Activated CD4-positive, alpha-beta memory T cell treated with anti-CD3 and anti-CD28 coated beads for 36 hours (primary cell): ENCODE measurements at regions of chr1 and their contacts with region 1.

Region 1: DNA sequence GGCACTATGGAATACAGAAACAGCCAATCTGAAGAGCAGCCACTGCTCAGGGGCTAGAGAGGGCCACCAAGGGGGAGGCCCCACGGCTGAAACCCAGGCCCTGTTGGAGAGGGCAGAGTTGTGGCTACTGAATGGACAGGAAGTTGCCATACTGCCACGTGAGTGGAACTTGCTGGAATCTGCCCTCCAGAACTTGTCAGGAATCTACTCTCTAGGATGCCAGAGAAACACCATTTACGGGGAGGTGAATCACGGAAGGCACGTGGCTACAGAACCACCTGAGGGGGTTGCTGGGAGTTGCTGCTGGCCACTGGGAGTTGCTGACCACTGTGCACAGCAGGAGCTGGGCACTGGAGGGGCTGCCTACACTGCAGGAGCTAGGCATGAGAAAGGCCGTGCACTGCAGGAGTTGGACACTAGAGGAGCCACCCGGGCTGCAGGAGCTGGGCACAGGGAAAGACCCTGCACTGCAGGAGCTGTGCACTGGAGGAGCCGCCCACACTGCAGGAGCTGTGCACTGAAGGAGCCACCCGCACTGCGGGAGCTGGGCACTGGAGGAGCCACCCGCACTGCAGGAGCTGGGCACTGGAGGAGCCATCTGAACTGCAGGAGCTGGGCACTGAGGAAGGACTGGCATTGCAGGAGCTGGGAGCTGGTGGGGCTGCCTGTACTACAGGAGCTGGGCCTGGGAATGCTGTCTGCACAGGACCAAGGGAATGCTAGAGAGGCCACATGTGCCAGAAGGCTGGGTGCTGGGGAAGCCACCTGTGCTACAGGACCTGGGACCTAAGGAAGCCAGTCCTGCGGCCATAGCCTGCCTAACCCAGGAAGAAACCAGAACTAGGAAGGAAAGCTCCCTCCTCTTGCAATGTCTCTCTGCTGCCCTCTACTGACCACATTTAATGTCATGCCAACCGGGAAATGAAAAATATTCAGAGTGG is 343.4 kb downstream of the MATN1 start:
- DNase-seq: peak; percentile 41
- H3K4me3 Mint-ChIP-seq: no peak overlapping the region
- H3K27ac Mint-ChIP-seq: no peak overlapping the region
- H3K4me1 Mint-ChIP-seq: peaks cover 2% of the 10 kb centered on the region
- H3K27me3 Mint-ChIP-seq: peaks cover 9% of the 10 kb centered on the region

Region 2: DNA sequence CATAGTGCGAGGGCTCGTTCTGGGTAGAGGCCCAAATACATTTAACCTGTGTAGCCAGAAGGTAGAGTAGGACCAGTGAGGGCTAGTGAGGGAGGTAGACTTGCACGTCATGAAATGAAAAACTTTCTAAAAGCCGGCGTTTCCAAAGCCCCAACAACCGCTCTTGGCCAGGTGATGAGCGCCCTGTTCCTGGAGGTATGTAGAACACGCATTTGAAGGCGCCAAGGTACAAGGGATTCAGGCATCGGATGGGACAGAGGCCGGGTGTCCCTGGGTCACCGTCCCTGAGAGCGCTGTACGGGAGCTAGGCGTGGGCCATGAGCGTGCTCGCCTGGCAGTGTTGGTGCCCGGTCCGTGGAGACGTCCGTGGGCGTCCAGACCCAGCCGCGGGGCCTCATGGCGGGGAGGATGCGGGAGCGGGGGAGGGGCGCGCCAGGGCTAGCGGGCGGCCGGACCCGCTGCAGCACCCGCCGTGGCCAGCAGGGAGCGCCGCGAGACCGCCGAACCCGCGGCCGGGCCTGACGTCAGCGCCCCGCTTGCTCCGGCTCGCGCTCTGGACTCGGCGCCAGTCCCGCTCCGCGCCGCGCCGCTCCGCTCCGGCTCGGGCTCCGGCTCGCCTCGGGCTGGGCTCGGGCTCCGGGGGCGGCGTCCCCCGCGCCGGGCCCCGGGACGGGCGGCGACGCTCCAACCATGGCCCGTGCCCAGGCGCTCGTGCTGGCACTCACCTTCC is 1143.8 kb before region 1 on chr1 and contains the start of gene PTPRU:
- CTCF ChIA-PET with region 1: interaction called, 17 read pairs
- POLR2A ChIA-PET with region 1: no interaction called
- intact Hi-C with region 1: no loop called
- DNase-seq: peak; percentile 86
- H3K4me3 Mint-ChIP-seq: peak within 1 kb of the TSS; percentile 60
- H3K27ac Mint-ChIP-seq: no peak within 1 kb of the TSS
- H3K4me1 Mint-ChIP-seq: peaks cover 17% of the 10 kb centered on the region
- H3K27me3 Mint-ChIP-seq: peaks cover 46% of the 10 kb centered on the region
- total RNA-seq, gene PTPRU: 0.17 to 0.85 TPM

Region 3: DNA sequence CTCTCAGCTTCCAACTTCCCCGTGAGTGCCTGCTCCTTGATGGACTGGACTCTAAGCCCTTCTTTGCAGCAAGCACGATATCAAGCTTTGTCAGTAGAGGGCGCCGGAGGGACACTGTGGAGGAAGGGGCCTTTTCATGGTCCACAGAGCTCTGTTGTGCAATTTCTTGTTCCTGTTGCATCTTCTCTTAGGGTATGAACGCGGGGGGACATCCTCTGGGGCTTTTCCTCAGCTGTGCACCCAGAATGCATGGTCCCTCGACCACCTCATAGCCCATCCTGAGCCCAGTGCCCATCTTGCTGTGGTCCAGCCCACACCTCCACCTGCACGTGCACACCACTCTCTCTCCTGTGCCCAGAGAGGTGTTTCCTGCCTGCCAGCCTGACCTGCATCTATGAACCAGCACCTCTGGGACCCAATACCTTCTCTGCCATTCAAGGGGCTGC is 586.8 kb before region 1 on chr1:
- CTCF ChIA-PET with region 1: interaction called, 10 read pairs
- POLR2A ChIA-PET with region 1: no interaction called
- intact Hi-C with region 1: no loop called
- DNase-seq: peak; percentile 80
- H3K4me3 Mint-ChIP-seq: no peak overlapping the region
- H3K27ac Mint-ChIP-seq: no peak overlapping the region
- H3K4me1 Mint-ChIP-seq: no peaks in the 10 kb centered on the region
- H3K27me3 Mint-ChIP-seq: peaks cover 7% of the 10 kb centered on the region

Region 4: DNA sequence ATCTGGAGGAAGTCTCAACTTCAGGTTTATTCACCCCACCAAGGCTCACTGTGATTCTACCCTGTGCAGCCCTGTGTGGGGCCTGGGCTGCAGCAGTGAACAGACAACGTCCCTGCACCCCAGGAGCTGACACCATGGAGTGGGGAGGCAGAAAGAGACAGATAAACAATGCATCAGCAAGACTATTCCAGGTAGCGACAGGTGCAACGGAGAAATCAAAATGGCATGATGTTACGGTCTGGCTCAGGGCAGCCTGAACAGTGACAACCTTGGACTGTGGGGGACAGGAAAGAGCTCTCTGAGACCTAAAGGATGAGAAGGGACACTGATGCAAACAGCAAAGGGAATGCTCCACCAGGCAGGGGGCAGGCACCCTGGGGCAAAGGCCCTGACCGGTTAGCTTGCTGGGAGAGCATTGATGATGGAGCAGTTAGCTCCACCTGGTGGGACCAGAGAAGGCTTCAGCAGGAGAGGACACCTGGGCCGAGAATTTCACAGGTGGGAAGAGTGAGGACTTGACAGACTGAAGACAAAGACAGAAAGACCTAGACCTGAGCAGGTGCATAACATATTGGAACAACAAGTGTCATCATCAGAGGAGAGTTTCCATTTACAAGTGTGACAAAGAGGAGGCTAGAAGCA is 246.4 kb before region 1 on chr1:
- CTCF ChIA-PET with region 1: no interaction called
- POLR2A ChIA-PET with region 1: no interaction called
- intact Hi-C with region 1: no loop called
- DNase-seq: no peak
- H3K4me3 Mint-ChIP-seq: no peak overlapping the region
- H3K27ac Mint-ChIP-seq: no peak overlapping the region
- H3K4me1 Mint-ChIP-seq: no peaks in the 10 kb centered on the region
- H3K27me3 Mint-ChIP-seq: peaks cover 6% of the 10 kb centered on the region

Region 5: GRCh38 chr1:30179942-30180543 is 199.9 kb before region 1 on chr1:
- CTCF ChIA-PET with region 1: no interaction called
- POLR2A ChIA-PET with region 1: no interaction called
- intact Hi-C with region 1: no loop called
- DNase-seq: no peak
- H3K4me3 Mint-ChIP-seq: no peak overlapping the region
- H3K27ac Mint-ChIP-seq: no peak overlapping the region
- H3K4me1 Mint-ChIP-seq: no peaks in the 10 kb centered on the region
- H3K27me3 Mint-ChIP-seq: peaks cover 3% of the 10 kb centered on the region

Region 6: GRCh38 chr1:30232288-30232899 is 147.6 kb before region 1 on chr1:
- CTCF ChIA-PET with region 1: interaction called, 10 read pairs
- POLR2A ChIA-PET with region 1: no interaction called
- intact Hi-C with region 1: no loop called
- DNase-seq: peak; percentile 29
- H3K4me3 Mint-ChIP-seq: no peak overlapping the region
- H3K27ac Mint-ChIP-seq: no peak overlapping the region
- H3K4me1 Mint-ChIP-seq: no peaks in the 10 kb centered on the region
- H3K27me3 Mint-ChIP-seq: peaks cover 2% of the 10 kb centered on the region

Region 7: GRCh38 chr1:30353637-30354036 is 26.3 kb before region 1 on chr1:
- CTCF ChIA-PET with region 1: interaction called, 19 read pairs
- POLR2A ChIA-PET with region 1: no interaction called
- intact Hi-C with region 1: no loop called
- DNase-seq: no peak
- H3K4me3 Mint-ChIP-seq: no peak overlapping the region
- H3K27ac Mint-ChIP-seq: no peak overlapping the region
- H3K4me1 Mint-ChIP-seq: no peaks in the 10 kb centered on the region
- H3K27me3 Mint-ChIP-seq: peaks cover 18% of the 10 kb centered on the region

Region 8: GRCh38 chr1:30362603-30362990 is 17.4 kb before region 1 on chr1:
- CTCF ChIA-PET with region 1: interaction called, 10 read pairs
- POLR2A ChIA-PET with region 1: no interaction called
- intact Hi-C with region 1: no loop called
- DNase-seq: no peak
- H3K4me3 Mint-ChIP-seq: no peak overlapping the region
- H3K27ac Mint-ChIP-seq: no peak overlapping the region
- H3K4me1 Mint-ChIP-seq: no peaks in the 10 kb centered on the region
- H3K27me3 Mint-ChIP-seq: peaks cover 17% of the 10 kb centered on the region